Naive thymus-derived CD4-positive, alpha-beta T cell (primary cell): ENCODE measurements at regions of chr2 and their contacts with region 1.

Region 1: GRCh38 chr2:221535824-221536223 is 36.3 kb downstream of the EPHA4 start:
- DNase-seq: no peak
- ATAC-seq: no peak
- H3K4me3 ChIP-seq: no peak overlapping the region
- H3K4me3 Mint-ChIP-seq: no peak overlapping the region
- H3K27ac ChIP-seq: no peak overlapping the region
- H3K27ac Mint-ChIP-seq: no peak overlapping the region
- H3K4me1 ChIP-seq: peaks cover 0 to 2% of the 10 kb centered on the region in 2 donors
- H3K4me1 Mint-ChIP-seq: peaks cover 5 to 23% (median 10%) of the 10 kb centered on the region in 7 donors
- H3K27me3 ChIP-seq: no peaks in the 10 kb centered on the region
- H3K27me3 Mint-ChIP-seq: peaks cover 0 to 36% (median 0%) of the 10 kb centered on the region in 5 donors

Region 2: DNA sequence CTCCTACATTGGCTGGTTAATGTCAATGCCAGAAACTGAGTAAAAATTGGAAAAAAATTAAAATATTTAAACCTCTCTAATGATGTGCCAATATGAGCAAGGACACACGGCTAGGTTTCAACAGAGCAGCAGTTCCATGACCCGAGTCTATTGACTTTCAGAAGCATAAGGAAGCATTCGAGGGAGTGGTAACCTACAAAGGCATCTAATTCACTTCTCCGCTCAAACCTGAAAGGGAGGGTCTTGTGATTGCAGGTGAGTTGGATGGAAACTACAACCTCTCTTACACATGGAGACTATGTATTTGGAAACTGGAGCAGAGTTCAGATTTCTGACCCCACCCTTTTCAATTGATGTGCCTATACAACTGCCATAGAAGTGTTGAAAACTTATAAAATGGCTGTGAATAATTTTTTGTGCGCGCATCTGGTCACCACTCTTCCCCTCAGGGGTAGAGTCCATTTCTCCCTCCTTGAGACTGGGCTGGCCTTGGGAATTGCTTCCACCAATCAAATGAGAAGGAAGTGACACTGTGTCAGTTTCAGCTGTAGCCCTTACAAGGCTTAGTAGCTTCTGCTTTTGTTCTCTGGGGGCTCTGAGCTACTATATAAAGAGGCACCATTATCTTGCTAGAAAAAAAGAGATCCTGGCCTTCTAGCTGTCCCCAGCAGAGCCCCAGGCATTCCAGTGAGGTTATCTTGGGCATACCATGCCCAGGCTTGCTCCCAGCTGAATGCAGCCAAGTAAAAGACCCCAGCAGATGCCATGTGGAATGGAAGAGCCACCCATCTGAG is 241.7 kb before region 1 on chr2:
- CTCF ChIA-PET with region 1: no interaction called
- POLR2A ChIA-PET with region 1: no interaction called
- intact Hi-C with region 1: no loop called
- DNase-seq: no peak
- ATAC-seq: no peak
- H3K4me3 ChIP-seq: no peak overlapping the region
- H3K4me3 Mint-ChIP-seq: no peak overlapping the region
- H3K27ac ChIP-seq: no peak overlapping the region
- H3K27ac Mint-ChIP-seq: no peak overlapping the region
- H3K4me1 ChIP-seq: no peaks in the 10 kb centered on the region
- H3K4me1 Mint-ChIP-seq: peaks cover 0 to under 1% (median 0%) of the 10 kb centered on the region in 7 donors
- H3K27me3 ChIP-seq: no peaks in the 10 kb centered on the region
- H3K27me3 Mint-ChIP-seq: peaks cover 7 to 15% (median 10%) of the 10 kb centered on the region in 5 donors

Region 3: DNA sequence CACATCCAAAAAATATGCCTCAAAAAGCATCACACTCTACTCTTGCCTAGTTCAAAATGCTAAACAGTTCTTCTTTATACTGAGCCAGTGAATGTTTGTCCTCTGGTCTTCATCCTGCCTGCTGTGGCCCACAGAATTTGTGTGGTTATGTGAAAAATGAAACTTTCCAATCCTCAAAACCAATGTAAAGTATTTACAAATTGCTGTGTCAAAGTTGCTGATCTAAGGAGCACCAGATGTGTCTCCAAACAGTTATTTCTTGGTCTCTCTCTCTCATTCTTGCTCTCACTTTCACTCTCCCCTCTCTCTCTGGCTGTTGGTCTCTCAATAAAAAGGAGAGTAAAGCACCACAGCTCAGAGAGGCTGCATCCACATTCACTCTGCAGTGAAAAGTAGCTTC is 13.3 kb after region 1 on chr2:
- CTCF ChIA-PET with region 1: no interaction called
- POLR2A ChIA-PET with region 1: no interaction called
- intact Hi-C with region 1: loop called in 1 of 2 experiments (anchors 2 kb)
- DNase-seq: no peak
- ATAC-seq: no peak
- H3K4me3 ChIP-seq: no peak overlapping the region
- H3K4me3 Mint-ChIP-seq: peak overlapping the region in 1 of 10 donors; percentile 62
- H3K27ac ChIP-seq: no peak overlapping the region
- H3K27ac Mint-ChIP-seq: peak overlapping the region in 2 of 9 donors; percentile 17 to 78
- H3K4me1 ChIP-seq: peaks cover 0 to 7% of the 10 kb centered on the region in 2 donors
- H3K4me1 Mint-ChIP-seq: peaks cover 0 to 28% (median 17%) of the 10 kb centered on the region in 7 donors
- H3K27me3 ChIP-seq: no peaks in the 10 kb centered on the region
- H3K27me3 Mint-ChIP-seq: peaks cover 0 to 11% (median 0%) of the 10 kb centered on the region in 5 donors